GM12878 (cell line): ENCODE measurements at regions of chr16 and their contacts with region 1.

Region 1: GRCh38 chr16:81873843-81874752 is 95.0 kb downstream of the PLCG2 start:
- DNase-seq: no peak
- ATAC-seq: peak; percentile 99
- H3K4me3 ChIP-seq: no peak overlapping the region
- H3K27ac ChIP-seq: peak overlapping the region; percentile 39; the same call in 1 of the 2 replicates
- H3K4me1 ChIP-seq: peaks cover 5% of the 10 kb centered on the region
- H3K27me3 ChIP-seq: no peaks in the 10 kb centered on the region
- CTCF ChIP-seq: peak; percentile 82 to 85 (median 83)
- EP300 ChIP-seq: no peak
- POLR2A ChIP-seq: no peak
- RAD21 ChIP-seq: peak; percentile 88

Region 2: GRCh38 chr16:81730090-81731051 is 143.7 kb before region 1 on chr16:
- CTCF ChIA-PET with region 1: interaction called, 21 read pairs
- POLR2A ChIA-PET with region 1: interaction called, 4 read pairs
- RAD21 ChIA-PET with region 1: interaction called, 7 read pairs
- SMC1A ChIA-PET with region 1: interaction called, 14 read pairs
- in situ Hi-C with region 1: no loop called
- intact Hi-C with region 1: no loop called
- DNase-seq: no peak
- ATAC-seq: peak; percentile 93
- H3K4me3 ChIP-seq: peak overlapping the region; percentile 52
- H3K27ac ChIP-seq: peak overlapping the region; percentile 60
- H3K4me1 ChIP-seq: peaks cover 12% of the 10 kb centered on the region
- H3K27me3 ChIP-seq: no peaks in the 10 kb centered on the region
- CTCF ChIP-seq: peak; percentile 49 to 78 (median 74)
- EP300 ChIP-seq: no peak
- POLR2A ChIP-seq: no peak
- RAD21 ChIP-seq: no peak

Region 3: DNA sequence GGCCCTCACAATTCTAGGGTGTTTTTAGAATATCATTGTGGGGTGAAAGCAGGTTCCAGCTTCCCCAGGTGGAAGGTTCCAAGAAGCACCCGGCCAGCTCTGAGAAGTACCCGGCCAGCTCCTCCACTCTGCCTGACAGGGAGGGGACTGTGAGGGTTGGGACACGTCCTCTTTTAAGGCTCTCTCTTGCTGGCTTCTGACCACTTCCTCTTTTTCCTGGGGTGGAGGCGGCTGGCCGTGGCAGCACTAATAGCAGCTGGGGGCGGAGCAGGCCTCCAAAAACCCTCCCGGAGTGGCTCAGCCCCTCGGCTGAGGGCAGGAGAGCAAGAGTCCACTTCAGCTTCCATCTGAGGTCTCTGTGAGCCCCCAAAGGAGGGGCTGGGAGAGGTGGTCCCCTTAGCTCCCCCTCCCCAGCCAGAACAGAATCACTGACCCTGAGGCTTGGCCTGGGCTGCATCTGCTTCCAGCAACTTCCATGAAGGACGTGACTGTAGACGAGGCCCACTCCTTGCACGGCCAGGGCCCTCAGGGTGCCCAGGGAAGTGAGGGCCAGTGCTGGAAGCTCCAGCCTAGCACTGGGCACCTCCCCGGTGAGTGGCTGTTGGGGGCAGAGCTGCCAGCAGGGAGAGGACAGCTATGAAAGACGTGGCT is 121.7 kb before region 1 on chr16:
- CTCF ChIA-PET with region 1: interaction called, 30 read pairs
- POLR2A ChIA-PET with region 1: no interaction called
- RAD21 ChIA-PET with region 1: interaction called, 20 read pairs
- SMC1A ChIA-PET with region 1: interaction called, 25 read pairs
- in situ Hi-C with region 1: no loop called
- intact Hi-C with region 1: no loop called
- DNase-seq: peak; percentile 72
- ATAC-seq: peak; percentile 97
- H3K4me3 ChIP-seq: peak overlapping the region; percentile 54; the same call in 1 of the 2 replicates
- H3K27ac ChIP-seq: peak overlapping the region; percentile 68
- H3K4me1 ChIP-seq: peaks cover 46% of the 10 kb centered on the region
- H3K27me3 ChIP-seq: no peaks in the 10 kb centered on the region
- CTCF ChIP-seq: no peak
- EP300 ChIP-seq: peak in 1 of 2 experiments; percentile 86; a peak in 3 of 4 replicates
- POLR2A ChIP-seq: peak; percentile 86
- RAD21 ChIP-seq: no peak

Region 4: GRCh38 chr16:81798311-81799137 is 75.6 kb before region 1 on chr16:
- CTCF ChIA-PET with region 1: interaction called, 22 read pairs
- POLR2A ChIA-PET with region 1: interaction called, 4 read pairs
- RAD21 ChIA-PET with region 1: interaction called, 41 read pairs
- SMC1A ChIA-PET with region 1: interaction called, 46 read pairs
- in situ Hi-C with region 1: no loop called
- intact Hi-C with region 1: loop called (anchors 5 kb)
- DNase-seq: peak; percentile 97
- ATAC-seq: peak; percentile 76
- H3K4me3 ChIP-seq: peak overlapping the region; percentile 62
- H3K27ac ChIP-seq: peak overlapping the region; percentile 98
- H3K4me1 ChIP-seq: peaks cover 52% of the 10 kb centered on the region
- H3K27me3 ChIP-seq: no peaks in the 10 kb centered on the region
- CTCF ChIP-seq: peak in 2 of 3 experiments; percentile 27 to 36; a peak in 4 of 6 replicates
- EP300 ChIP-seq: peak; percentile 80 to 84; a peak in 3 of 4 replicates
- POLR2A ChIP-seq: peak; percentile 50; the same call in 1 of the 2 replicates
- RAD21 ChIP-seq: no peak; the same call in 1 of the 2 replicates

Region 5: GRCh38 chr16:81823111-81823510 is 51.0 kb before region 1 on chr16:
- CTCF ChIA-PET with region 1: interaction called, 40 read pairs
- POLR2A ChIA-PET with region 1: interaction called, 9 read pairs
- RAD21 ChIA-PET with region 1: interaction called, 46 read pairs
- SMC1A ChIA-PET with region 1: interaction called, 56 read pairs
- in situ Hi-C with region 1: no loop called
- intact Hi-C with region 1: loop called (anchors 5 kb)
- DNase-seq: no peak
- ATAC-seq: peak; percentile 72
- H3K4me3 ChIP-seq: peak overlapping the region; percentile 71
- H3K27ac ChIP-seq: peak overlapping the region; percentile 98
- H3K4me1 ChIP-seq: peaks cover 86% of the 10 kb centered on the region
- H3K27me3 ChIP-seq: no peaks in the 10 kb centered on the region
- CTCF ChIP-seq: peak; percentile 4 to 42 (median 11); a peak in 2 of 6 replicates
- EP300 ChIP-seq: peak; percentile 23 to 60; a peak in 3 of 4 replicates
- POLR2A ChIP-seq: peak; percentile 80
- RAD21 ChIP-seq: peak; percentile 53

Region 6: DNA sequence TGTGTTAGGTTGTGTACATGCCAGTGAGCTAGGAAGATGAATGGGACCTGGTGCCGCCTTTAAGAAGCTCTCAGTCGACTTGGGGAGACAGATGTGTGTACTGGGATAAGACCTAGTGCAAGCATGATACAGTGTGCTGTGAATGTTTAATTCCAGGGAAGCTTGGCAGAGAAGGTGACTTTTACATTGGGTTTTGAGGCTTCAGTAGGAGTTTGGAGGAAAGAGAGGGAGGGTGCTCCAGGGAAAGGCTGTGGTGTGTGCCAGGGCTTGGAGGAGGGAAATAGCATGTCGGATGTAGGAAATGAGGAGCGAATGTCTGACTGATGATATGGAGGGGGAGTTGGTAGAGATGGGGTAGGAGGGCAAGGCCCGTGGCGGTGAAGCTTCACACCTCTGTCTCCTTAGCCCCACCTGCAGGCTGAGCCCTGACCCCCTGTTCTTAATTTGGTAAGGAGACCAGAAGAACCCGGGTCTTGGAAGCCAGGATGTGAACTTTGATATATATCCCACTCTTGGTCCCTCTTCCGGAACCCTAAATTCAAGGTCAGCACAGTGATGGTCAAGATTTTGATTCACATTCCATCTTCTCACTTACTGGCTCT is 18.4 kb before region 1 on chr16:
- CTCF ChIA-PET with region 1: interaction called, 39 read pairs
- POLR2A ChIA-PET with region 1: no interaction called
- RAD21 ChIA-PET with region 1: interaction called, 5 read pairs
- SMC1A ChIA-PET with region 1: interaction called, 44 read pairs
- in situ Hi-C with region 1: no loop called
- intact Hi-C with region 1: no loop called
- DNase-seq: no peak
- ATAC-seq: peak; percentile 56
- H3K4me3 ChIP-seq: no peak overlapping the region
- H3K27ac ChIP-seq: no peak overlapping the region
- H3K4me1 ChIP-seq: peaks cover 6% of the 10 kb centered on the region
- H3K27me3 ChIP-seq: no peaks in the 10 kb centered on the region
- CTCF ChIP-seq: 0 out of 6 replicates have a peak, but pooled peaks of 2 of the 3 experiments have one; percentile 1 to 20
- EP300 ChIP-seq: no peak
- POLR2A ChIP-seq: no peak
- RAD21 ChIP-seq: peak; percentile 22; the same call in 1 of the 2 replicates

Region 7: DNA sequence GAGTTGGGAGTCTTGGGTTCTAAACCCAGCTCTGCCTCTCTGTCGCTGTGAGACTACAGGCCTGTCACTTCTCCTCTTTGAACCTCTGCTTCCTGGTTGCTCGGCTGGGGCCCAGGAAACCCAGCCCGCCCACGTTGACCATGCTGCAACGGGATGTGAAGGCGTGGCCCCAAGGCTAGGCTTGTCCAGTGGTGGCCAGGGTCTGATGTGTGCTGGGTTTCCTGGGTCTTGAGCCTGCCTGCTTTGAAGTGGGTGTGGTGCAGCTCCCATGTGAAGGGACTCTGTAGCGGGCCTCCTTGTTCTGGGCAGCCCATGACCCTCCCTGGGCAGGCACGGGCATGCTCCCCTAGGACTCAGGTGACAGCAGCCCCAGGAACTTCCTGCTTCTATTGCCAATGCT is 54.9 kb after region 1 on chr16:
- CTCF ChIA-PET with region 1: no interaction called
- POLR2A ChIA-PET with region 1: no interaction called
- RAD21 ChIA-PET with region 1: no interaction called
- SMC1A ChIA-PET with region 1: no interaction called
- in situ Hi-C with region 1: no loop called
- intact Hi-C with region 1: no loop called
- DNase-seq: no peak
- ATAC-seq: no peak; the same call in 2 of the 3 replicates
- H3K4me3 ChIP-seq: no peak overlapping the region
- H3K27ac ChIP-seq: no peak overlapping the region
- H3K4me1 ChIP-seq: no peaks in the 10 kb centered on the region
- H3K27me3 ChIP-seq: no peaks in the 10 kb centered on the region
- CTCF ChIP-seq: no peak
- EP300 ChIP-seq: no peak
- POLR2A ChIP-seq: 0 out of 2 replicates have a peak, but pooled peaks have one; percentile 26
- RAD21 ChIP-seq: no peak